Caco-2 (cell line): ENCODE measurements at regions of chr19 and their contacts with region 1.

Region 1: DNA sequence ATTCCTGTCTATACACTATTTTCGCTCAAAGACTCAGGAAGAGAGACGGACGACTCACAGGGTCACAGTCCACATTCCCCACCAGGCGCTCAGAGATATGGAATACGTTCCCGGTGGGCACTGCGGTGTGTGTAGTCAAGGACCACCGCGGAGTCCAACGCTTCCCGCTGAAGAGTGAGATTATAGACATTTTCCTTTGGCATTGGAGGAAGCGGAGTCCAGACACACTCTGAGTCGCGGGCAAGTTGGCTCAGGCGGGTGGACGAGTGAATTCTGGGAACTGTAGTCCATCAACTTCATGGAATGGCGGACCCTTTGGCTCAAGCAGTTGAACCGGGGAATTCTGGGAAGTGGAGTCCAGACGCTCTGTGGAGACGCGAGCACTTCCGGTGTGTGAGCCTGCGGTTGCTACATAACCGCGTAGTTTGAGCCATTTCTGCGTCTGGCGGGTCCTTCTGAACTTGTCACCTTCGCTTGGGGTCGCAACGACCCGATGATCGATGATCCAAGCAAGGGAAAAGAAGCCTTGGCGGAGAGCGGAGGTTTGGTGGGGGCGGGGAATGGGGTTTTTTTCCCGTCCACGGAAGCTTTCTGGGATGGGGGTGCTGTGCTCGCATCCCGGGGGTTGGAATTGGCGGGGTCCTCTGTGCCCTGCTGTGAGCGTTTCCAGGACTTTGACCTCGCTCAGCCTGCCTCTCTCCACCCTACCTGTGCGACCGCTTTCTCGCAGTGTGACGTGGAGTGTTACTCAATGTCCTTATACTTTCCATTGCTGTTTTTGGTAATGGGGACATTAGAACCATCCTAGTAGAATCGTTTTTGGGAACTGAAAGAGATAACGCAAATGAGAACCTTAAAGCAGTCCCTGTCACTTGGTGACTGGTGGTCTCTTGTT is at the start of gene ZNF230:
- DNase-seq: peak; percentile 93 to 95
- H3K4me3 ChIP-seq: peak within 1 kb of the TSS; percentile 50
- H3K4me3 Mint-ChIP-seq: peak within 1 kb of the TSS; percentile 89
- H3K27ac Mint-ChIP-seq: peak within 1 kb of the TSS; percentile 91
- H3K4me1 ChIP-seq: no peaks in the 10 kb centered on the region; the same call in 1 of the 2 replicates
- H3K4me1 Mint-ChIP-seq: peaks cover 15% of the 10 kb centered on the region
- H3K27me3 ChIP-seq: no peaks in the 10 kb centered on the region
- H3K27me3 Mint-ChIP-seq: no peaks in the 10 kb centered on the region
- CTCF ChIP-seq: no peak
- total RNA-seq, gene ZNF230: 5.1 and 5.5 TPM in 2 replicates

Region 2: DNA sequence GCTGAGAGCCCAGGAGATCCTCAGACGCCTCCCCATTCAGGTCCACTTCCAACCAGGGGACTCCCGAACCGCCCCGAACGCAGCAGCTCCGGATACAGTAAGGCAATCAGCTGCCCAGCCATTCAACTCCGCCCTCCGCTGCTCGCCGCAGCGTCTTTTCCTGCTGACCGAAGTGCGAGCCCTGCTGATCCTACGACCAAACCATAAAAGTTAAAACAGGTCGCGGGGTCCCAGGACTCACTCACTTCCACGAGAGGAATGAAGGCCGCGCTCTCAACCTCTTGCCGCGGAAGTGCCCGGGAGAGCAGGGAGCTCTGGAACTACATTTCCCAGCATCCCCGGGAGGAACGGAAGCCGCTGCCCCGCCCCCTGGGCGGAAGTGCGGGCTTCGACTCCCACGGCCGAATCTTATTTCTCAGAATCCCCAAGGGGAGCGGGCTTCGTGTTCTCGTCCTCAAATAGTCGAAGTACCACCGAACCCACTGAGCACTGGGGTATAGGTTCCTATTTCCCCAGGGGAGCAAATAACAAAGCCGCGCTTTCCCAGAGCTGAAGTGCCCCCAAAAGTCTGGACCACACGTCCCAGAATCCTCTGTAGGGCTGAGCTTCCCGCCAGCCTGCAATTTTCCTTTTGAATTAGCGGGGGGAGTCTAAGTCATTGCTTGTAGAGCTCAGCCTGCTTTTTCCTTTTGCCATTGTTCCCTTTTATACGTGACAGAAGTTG is 67.7 kb before region 1 on chr19 and contains the start of gene ZNF45:
- CTCF ChIA-PET with region 1: no interaction called
- POLR2A ChIA-PET with region 1: no interaction called
- intact Hi-C with region 1: loop called (anchors 2 kb)
- DNase-seq: peak; percentile 90 to 92
- H3K4me3 ChIP-seq: peak within 1 kb of the TSS; percentile 52
- H3K4me3 Mint-ChIP-seq: peak within 1 kb of the TSS; percentile 94
- H3K27ac Mint-ChIP-seq: peak within 1 kb of the TSS; percentile 88
- H3K4me1 ChIP-seq: peaks cover 5% of the 10 kb centered on the region; the same call in 1 of the 2 replicates
- H3K4me1 Mint-ChIP-seq: peaks cover 11% of the 10 kb centered on the region
- H3K27me3 ChIP-seq: no peaks in the 10 kb centered on the region
- H3K27me3 Mint-ChIP-seq: peaks cover under 1% of the 10 kb centered on the region
- CTCF ChIP-seq: no peak
- total RNA-seq, gene ZNF45: 14.8 and 14.9 TPM in 2 replicates

Region 3: GRCh38 chr19:43950834-43951645 is 51.8 kb before region 1 on chr19 and contains the start of gene ZNF221:
- CTCF ChIA-PET with region 1: no interaction called
- POLR2A ChIA-PET with region 1: no interaction called
- intact Hi-C with region 1: loop called (anchors 1 kb)
- DNase-seq: peak; percentile 94 to 95
- H3K4me3 ChIP-seq: peak within 1 kb of the TSS; percentile 58
- H3K4me3 Mint-ChIP-seq: peak within 1 kb of the TSS; percentile 100
- H3K27ac Mint-ChIP-seq: peak within 1 kb of the TSS; percentile 93
- H3K4me1 ChIP-seq: no peaks in the 10 kb centered on the region
- H3K4me1 Mint-ChIP-seq: no peaks in the 10 kb centered on the region
- H3K27me3 ChIP-seq: no peaks in the 10 kb centered on the region
- H3K27me3 Mint-ChIP-seq: peaks cover 11% of the 10 kb centered on the region
- CTCF ChIP-seq: peak; percentile 19 to 35
- total RNA-seq, gene ZNF221: 4.3 and 6.2 TPM in 2 replicates

Region 4: DNA sequence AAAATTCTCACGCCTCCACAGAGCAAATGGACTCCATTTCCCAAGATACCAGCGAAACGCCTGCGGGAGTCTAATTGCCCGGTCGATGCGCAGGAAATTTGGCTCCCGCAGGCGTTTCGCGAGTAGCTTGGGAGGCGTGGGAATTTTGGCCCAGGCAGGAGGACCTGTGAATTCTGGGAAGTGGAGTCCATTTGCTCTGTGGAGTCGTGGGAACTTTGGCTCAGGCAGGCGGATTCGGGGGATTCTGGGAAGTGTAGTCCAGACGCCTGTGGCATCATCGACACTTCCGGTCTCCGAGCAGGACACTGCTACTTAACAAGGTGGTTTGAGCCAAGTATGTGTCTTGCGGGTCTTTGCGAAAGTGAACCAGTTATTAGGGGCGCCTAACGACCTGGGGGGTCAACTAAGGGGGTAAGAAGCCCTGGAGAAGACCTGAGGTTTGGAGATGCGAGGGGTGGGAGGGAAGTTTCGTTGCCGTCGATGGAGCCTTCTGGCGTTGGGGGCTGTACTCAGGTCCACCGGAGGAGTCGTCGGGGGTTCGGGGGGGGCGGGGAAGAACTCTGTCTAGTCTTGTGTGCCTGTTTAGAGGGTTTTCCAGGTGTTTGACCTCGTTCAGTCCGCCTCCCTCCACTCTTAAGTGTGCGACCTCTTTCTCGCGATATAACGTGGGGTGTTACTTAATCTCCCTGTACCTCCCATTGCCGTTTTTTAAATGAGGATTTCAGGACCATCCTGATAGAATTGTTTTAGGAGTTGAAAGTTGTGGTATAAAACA is 18.7 kb before region 1 on chr19 and contains the start of gene ZNF155:
- CTCF ChIA-PET with region 1: no interaction called
- POLR2A ChIA-PET with region 1: interaction called, 3 read pairs
- intact Hi-C with region 1: loop called (anchors 1 kb)
- DNase-seq: peak; percentile 92 to 96
- H3K4me3 ChIP-seq: peak within 1 kb of the TSS; percentile 98
- H3K4me3 Mint-ChIP-seq: peak within 1 kb of the TSS; percentile 99
- H3K27ac Mint-ChIP-seq: peak within 1 kb of the TSS; percentile 95
- H3K4me1 ChIP-seq: no peaks in the 10 kb centered on the region
- H3K4me1 Mint-ChIP-seq: no peaks in the 10 kb centered on the region
- H3K27me3 ChIP-seq: no peaks in the 10 kb centered on the region
- H3K27me3 Mint-ChIP-seq: no peaks in the 10 kb centered on the region
- CTCF ChIP-seq: no peak
- total RNA-seq, gene ZNF155: 9.4 and 10.3 TPM in 2 replicates

Region 5: GRCh38 chr19:44025217-44025936 is 22.6 kb after region 1 on chr19 and contains the start of gene ZNF222:
- CTCF ChIA-PET with region 1: no interaction called
- POLR2A ChIA-PET with region 1: interaction called, 3 read pairs
- intact Hi-C with region 1: loop called (anchors 1 kb)
- DNase-seq: peak; percentile 75 to 83
- H3K4me3 ChIP-seq: peak within 1 kb of the TSS; percentile 84
- H3K4me3 Mint-ChIP-seq: peak within 1 kb of the TSS; percentile 99
- H3K27ac Mint-ChIP-seq: peak within 1 kb of the TSS; percentile 96
- H3K4me1 ChIP-seq: peaks cover 14% of the 10 kb centered on the region
- H3K4me1 Mint-ChIP-seq: peaks cover 12% of the 10 kb centered on the region
- H3K27me3 ChIP-seq: no peaks in the 10 kb centered on the region
- H3K27me3 Mint-ChIP-seq: peaks cover 5% of the 10 kb centered on the region
- CTCF ChIP-seq: no peak
- total RNA-seq, gene ZNF222: 4.4 and 5.6 TPM in 2 replicates

Region 6: GRCh38 chr19:44051654-44052402 is 49.0 kb after region 1 on chr19 and contains the start of gene ZNF223:
- CTCF ChIA-PET with region 1: interaction called, 3 read pairs
- POLR2A ChIA-PET with region 1: interaction called, 5 read pairs
- intact Hi-C with region 1: loop called (anchors 1 kb)
- DNase-seq: peak; percentile 98
- H3K4me3 ChIP-seq: peak within 1 kb of the TSS; percentile 69
- H3K4me3 Mint-ChIP-seq: peak within 1 kb of the TSS; percentile 74
- H3K27ac Mint-ChIP-seq: peak within 1 kb of the TSS; percentile 85
- H3K4me1 ChIP-seq: peaks cover 7% of the 10 kb centered on the region
- H3K4me1 Mint-ChIP-seq: peaks cover 30% of the 10 kb centered on the region
- H3K27me3 ChIP-seq: no peaks in the 10 kb centered on the region
- H3K27me3 Mint-ChIP-seq: no peaks in the 10 kb centered on the region
- CTCF ChIP-seq: no peak
- total RNA-seq, gene ZNF223: 9.9 and 11.3 TPM in 2 replicates

Region 7: DNA sequence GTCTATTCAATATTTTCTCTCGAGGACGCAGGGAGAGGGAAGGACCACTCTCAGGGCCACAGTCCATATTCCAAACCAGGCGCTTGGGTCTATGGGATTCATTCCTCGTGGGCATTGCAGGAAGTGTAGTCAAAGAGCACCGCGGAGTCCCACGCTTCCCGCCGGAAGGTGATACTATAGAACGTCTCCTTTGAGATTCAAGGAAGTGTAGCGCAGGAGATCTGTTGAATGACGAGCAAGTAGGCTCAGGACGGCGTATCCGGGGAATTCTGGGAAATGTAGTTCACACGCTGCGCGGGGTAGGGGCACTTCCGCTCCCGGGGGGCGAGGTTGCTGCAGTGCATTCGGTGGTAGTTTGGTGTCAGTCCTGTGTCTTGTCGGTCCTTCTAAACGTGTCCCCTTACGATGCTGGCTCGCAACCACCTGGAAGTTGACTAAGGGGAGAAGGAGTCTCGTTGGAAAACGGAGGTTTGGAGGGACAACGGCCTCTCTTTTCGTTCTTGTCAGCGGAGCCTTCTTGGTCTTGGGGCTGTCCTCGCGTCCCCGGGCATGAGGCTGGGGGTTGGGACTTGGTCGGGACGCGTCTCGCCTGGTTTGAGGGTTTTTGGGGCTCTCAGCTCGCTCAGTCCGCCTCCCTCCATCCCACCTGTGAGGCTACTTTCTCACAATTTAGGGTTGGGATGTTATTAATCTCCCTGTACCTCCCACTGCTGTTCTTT is 69.2 kb after region 1 on chr19 and contains the start of gene ZNF284:
- CTCF ChIA-PET with region 1: no interaction called
- POLR2A ChIA-PET with region 1: no interaction called
- intact Hi-C with region 1: loop called (anchors 1 kb)
- DNase-seq: peak; percentile 91 to 94
- H3K4me3 ChIP-seq: peak within 1 kb of the TSS; percentile 77
- H3K4me3 Mint-ChIP-seq: peak within 1 kb of the TSS; percentile 83
- H3K27ac Mint-ChIP-seq: peak within 1 kb of the TSS; percentile 85
- H3K4me1 ChIP-seq: peaks cover 3% of the 10 kb centered on the region; the same call in 1 of the 2 replicates
- H3K4me1 Mint-ChIP-seq: peaks cover 14% of the 10 kb centered on the region
- H3K27me3 ChIP-seq: no peaks in the 10 kb centered on the region
- H3K27me3 Mint-ChIP-seq: no peaks in the 10 kb centered on the region
- CTCF ChIP-seq: no peak
- total RNA-seq, gene ZNF284: 2.3 and 3.6 TPM in 2 replicates

Region 8: GRCh38 chr19:44777715-44778347 is 775.0 kb after region 1 on chr19 and contains the start of gene CBLC:
- CTCF ChIA-PET with region 1: no interaction called
- POLR2A ChIA-PET with region 1: no interaction called
- intact Hi-C with region 1: no loop called
- DNase-seq: peak; percentile 97 to 98
- H3K4me3 ChIP-seq: peak within 1 kb of the TSS; percentile 83
- H3K4me3 Mint-ChIP-seq: peak within 1 kb of the TSS; percentile 73
- H3K27ac Mint-ChIP-seq: peak within 1 kb of the TSS; percentile 91
- H3K4me1 ChIP-seq: peaks cover 15% of the 10 kb centered on the region
- H3K4me1 Mint-ChIP-seq: peaks cover 5% of the 10 kb centered on the region
- H3K27me3 ChIP-seq: no peaks in the 10 kb centered on the region
- H3K27me3 Mint-ChIP-seq: no peaks in the 10 kb centered on the region
- CTCF ChIP-seq: peak in 1 of 2 experiments; percentile 38
- total RNA-seq, gene CBLC: 42.3 and 43.6 TPM in 2 replicates